Pancreas (tissue), 10 donors: ENCODE measurements at regions of chr14 and their contacts with region 1.

Region 1: DNA sequence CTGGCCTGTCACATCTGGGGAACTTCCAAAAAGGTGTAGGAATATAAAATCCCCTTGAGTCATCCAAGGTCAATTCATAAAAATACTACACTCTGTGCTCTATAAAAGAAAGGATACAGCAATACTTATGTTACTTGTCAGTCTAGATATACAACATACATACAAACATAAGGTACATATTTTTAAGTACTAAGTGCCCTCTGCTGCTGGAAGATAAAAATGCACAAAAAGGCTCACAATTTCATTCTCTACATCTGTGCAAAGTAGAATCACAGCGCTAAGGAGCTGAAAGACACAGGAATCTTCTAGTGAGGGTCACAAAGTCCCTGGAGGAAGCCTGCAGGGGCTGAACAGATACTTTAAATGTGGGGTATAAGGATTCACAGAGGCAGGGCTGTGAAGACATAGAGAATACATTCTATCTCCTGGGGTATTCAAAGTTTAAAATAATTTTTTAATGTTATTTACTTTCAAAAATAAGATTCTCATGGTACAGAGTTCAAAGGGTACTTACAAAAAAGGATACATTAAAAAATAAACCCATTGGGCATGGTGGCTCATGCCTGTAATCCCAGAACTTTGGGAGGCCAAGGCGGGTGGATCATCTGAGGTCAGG is 10.2 kb upstream of the GOLGA5 start:
- DNase-seq: peak in 2 of 6 donors; percentile 19 to 46
- ATAC-seq: peak; percentile 61 to 79 (median 70)
- H3K4me3 ChIP-seq: no peak overlapping the region
- H3K27ac ChIP-seq: no peak overlapping the region
- H3K4me1 ChIP-seq: peaks cover 5 to 9% (median 7%) of the 10 kb centered on the region in 3 donors
- H3K27me3 ChIP-seq: no peaks in the 10 kb centered on the region
- CTCF ChIP-seq: peak in 3 of 4 donors; percentile 7 to 40 (median 34)

Region 2: DNA sequence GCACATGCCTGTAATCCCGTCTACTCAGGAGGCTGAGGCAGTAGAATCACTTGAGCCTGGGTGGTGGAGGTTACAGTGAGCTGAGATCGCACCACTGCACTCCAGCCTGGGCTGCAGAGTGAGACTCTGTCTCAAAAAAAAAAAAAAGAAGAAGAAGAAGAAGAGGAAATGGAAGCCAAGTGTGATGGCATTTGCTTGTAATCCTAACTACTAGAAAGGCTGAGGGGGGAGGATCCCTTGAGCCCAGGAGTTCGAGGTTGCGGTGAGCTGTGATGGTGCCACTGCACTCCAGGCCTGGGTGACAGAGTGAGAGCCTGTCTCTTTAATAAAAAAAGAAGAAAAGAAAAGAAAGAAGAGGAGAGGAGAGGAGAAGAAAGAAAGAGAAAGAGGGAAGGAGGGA is 87.6 kb before region 1 on chr14:
- intact Hi-C with region 1: loop called in 1 of 3 experiments (anchors 5 kb)
- DNase-seq: no peak
- ATAC-seq: no peak
- H3K4me3 ChIP-seq: no peak overlapping the region
- H3K27ac ChIP-seq: no peak overlapping the region
- H3K4me1 ChIP-seq: peaks cover 13 to 16% (median 13%) of the 10 kb centered on the region in 3 donors
- H3K27me3 ChIP-seq: no peaks in the 10 kb centered on the region
- CTCF ChIP-seq: no peak

Region 3: DNA sequence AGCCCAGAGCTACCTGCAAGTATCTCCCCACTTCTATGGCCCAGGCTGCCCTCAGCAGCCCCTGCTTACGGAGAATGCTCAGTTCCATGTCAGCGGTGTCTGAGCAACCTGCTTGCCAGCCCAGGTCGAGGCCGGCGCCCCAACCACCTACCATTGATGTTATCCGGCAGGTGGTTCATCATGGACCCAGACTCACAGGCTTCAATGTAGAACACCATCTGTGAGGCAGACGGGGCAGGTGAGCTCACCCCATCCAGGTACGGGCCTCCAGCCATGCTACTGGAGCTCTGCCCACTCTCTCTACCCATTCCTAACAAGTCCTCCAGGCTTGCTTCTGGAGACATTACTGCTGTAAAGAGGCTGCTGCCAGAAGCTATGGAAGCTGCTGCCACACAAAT is 71.3 kb before region 1 on chr14:
- intact Hi-C with region 1: loop called in 2 of 3 experiments (anchors 5 to 10 kb)
- DNase-seq: no peak
- ATAC-seq: no peak
- H3K4me3 ChIP-seq: no peak overlapping the region
- H3K27ac ChIP-seq: no peak overlapping the region
- H3K4me1 ChIP-seq: no peaks in the 10 kb centered on the region
- H3K27me3 ChIP-seq: no peaks in the 10 kb centered on the region
- CTCF ChIP-seq: no peak

Region 4: DNA sequence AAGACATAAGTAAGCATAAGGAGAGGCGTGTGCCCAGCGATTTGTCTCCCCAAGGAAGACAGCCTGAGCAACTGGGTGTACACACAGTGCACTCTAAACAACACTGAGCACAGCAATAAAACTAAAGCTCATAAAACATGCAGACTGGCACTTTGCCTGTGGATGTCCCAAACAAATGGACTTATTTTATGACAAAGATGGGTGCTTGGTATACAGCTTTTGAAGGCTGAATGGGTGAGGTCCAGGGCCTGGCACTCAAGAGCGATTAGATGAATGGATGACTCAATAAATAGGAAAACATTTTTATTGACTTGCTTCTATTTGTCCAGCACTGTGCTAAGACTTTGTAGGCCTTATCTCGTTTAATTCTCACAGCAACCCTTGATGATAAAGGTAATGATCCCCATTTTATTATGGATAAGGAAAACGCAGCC is 64.0 kb before region 1 on chr14:
- intact Hi-C with region 1: loop called in 1 of 3 experiments (anchors 10 kb)
- DNase-seq: no peak
- ATAC-seq: peak in 3 of 4 donors; percentile 15 to 75 (median 37)
- H3K4me3 ChIP-seq: no peak overlapping the region
- H3K27ac ChIP-seq: no peak overlapping the region
- H3K4me1 ChIP-seq: peaks cover 0 to 5% (median 0%) of the 10 kb centered on the region in 3 donors
- H3K27me3 ChIP-seq: no peaks in the 10 kb centered on the region
- CTCF ChIP-seq: no peak